Vagina (tissue), 2 donors: ENCODE measurements at regions of chr3 and their contacts with region 1.

Region 1: DNA sequence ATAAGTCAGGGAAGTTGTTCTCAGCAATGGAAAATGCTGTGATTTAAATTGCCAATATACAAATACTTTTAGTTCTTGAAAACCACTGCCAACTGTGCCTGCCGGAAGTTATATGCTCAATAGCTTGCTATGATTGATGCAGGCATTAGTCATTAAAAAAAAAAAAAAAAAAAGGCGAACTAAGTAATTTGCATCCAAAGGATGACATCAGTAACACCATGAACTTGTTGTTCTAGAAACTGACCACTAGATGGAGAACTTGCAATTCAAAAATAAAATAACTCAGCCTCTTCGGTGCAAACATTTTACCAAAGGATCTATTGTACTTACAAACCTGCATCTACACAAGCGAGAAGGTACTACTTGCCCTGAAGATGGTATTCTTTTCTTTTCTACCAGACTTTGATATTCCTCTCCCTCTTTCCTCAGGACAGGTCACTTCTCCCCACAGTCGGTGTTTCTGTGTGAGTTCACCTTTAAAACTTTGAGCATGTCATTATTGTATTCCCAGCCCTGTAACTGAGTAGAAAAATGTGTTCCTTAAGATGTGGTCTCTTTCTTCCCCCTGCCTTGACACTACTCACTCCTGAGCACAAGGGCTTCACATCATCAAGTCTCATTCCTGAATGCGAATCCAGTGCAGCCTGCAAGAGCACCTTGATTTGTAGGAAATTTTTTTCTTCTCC is 115.0 kb upstream of the VEPH1 start:
- DNase-seq: no peak
- H3K4me3 ChIP-seq: no peak overlapping the region
- H3K27ac ChIP-seq: no peak overlapping the region
- H3K4me1 ChIP-seq: no peaks in the 10 kb centered on the region
- H3K27me3 ChIP-seq: no peaks in the 10 kb centered on the region
- CTCF ChIP-seq: peak in 2 of 3 experiments; percentile 8 to 50
- POLR2A ChIP-seq: no peak

Region 2: GRCh38 chr3:157551961-157552360 is 66.3 kb before region 1 on chr3:
- intact Hi-C with region 1: no loop called
- DNase-seq: no peak
- H3K4me3 ChIP-seq: no peak overlapping the region
- H3K27ac ChIP-seq: no peak overlapping the region
- H3K4me1 ChIP-seq: no peaks in the 10 kb centered on the region
- H3K27me3 ChIP-seq: no peaks in the 10 kb centered on the region
- CTCF ChIP-seq: no peak
- POLR2A ChIP-seq: no peak

Region 3: DNA sequence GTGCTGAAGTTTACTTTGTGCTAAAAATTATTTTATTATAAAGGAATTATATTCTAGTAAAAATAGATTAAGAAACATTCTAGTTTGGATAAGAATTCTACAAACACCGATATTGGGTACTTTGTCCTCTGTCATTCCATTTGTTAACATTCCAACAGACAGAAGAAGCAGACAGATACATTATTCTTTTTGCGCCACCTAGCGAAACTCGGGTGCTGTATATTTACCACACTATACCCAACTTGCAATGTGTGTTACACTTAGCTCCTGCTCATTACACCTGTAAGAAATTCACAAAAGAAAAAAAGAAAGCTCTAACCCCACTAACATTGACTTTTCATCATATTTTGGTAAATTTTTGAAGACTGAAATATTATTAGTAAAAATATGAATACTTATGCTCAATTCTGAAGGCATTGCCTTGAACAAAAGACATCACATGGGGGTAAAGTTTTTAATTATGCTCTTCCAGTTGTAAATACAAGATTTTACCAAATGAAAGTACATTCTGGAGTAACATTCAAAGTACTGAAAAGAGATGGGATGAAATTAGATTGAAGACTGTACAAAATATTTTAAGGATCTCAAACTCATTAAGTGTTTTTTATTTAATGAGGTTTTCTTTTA is 816.3 kb after region 1 on chr3:
- intact Hi-C with region 1: loop called (anchors 5 kb)
- DNase-seq: no peak
- H3K4me3 ChIP-seq: no peak overlapping the region
- H3K27ac ChIP-seq: no peak overlapping the region
- H3K4me1 ChIP-seq: no peaks in the 10 kb centered on the region
- H3K27me3 ChIP-seq: no peaks in the 10 kb centered on the region
- CTCF ChIP-seq: peak in 2 of 3 experiments; percentile 43 to 65
- POLR2A ChIP-seq: no peak